Uterus (tissue), 4 donors: ENCODE measurements at regions of chr11 and their contacts with region 1.

Region 1: GRCh38 chr11:12673924-12674570 is at the start of gene TEAD1:
- DNase-seq: peak; percentile 95 to 99
- H3K4me3 ChIP-seq: peak within 1 kb of the TSS; percentile 61 to 96
- H3K27ac ChIP-seq: peak within 1 kb of the TSS; percentile 96 to 100
- H3K4me1 ChIP-seq: peaks cover under 1 to 4% of the 10 kb centered on the region in 2 donors
- H3K27me3 ChIP-seq: no peaks in the 10 kb centered on the region
- CTCF ChIP-seq: peak in 2 of 4 experiments; percentile 20 to 21
- POLR2A ChIP-seq: peak; percentile 68 to 88
- total RNA-seq, gene TEAD1: 38.8 to 110 (median 75.3) TPM

Region 2: DNA sequence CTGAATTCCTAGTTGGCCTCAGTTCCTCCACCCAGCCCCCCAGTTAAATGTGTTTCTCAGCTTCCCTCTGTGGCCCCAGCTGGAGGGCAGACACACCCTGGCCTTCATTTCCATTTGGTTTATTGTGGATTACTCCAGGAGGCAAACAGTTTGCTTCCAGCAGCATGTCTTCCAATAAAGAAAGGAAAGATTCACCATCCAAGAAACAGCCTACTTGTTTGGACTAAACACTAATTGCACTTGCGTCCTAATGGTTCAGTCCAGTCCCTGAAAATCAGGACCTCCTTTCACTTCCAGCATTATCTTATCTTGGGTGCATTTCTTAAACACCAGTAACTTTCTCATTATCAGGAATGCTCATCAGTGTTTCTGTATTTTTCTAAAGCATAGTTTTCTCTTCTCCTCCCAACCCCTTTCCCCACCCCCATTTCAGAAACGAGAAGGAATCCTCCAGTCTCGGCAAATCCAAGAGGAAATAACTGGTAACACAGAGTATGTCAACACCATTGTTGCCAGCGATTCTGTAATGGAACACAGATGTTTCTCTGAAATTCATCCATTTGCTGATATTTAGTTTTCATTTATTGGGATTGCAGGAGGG is 165.8 kb before region 1 on chr11:
- intact Hi-C with region 1: no loop called
- DNase-seq: peak; percentile 37 to 47
- H3K4me3 ChIP-seq: no peak overlapping the region
- H3K27ac ChIP-seq: peak overlapping the region; percentile 70 to 72
- H3K4me1 ChIP-seq: peaks cover 0 to 7% of the 10 kb centered on the region in 2 donors
- H3K27me3 ChIP-seq: no peaks in the 10 kb centered on the region
- CTCF ChIP-seq: no peak
- POLR2A ChIP-seq: no peak

Region 3: DNA sequence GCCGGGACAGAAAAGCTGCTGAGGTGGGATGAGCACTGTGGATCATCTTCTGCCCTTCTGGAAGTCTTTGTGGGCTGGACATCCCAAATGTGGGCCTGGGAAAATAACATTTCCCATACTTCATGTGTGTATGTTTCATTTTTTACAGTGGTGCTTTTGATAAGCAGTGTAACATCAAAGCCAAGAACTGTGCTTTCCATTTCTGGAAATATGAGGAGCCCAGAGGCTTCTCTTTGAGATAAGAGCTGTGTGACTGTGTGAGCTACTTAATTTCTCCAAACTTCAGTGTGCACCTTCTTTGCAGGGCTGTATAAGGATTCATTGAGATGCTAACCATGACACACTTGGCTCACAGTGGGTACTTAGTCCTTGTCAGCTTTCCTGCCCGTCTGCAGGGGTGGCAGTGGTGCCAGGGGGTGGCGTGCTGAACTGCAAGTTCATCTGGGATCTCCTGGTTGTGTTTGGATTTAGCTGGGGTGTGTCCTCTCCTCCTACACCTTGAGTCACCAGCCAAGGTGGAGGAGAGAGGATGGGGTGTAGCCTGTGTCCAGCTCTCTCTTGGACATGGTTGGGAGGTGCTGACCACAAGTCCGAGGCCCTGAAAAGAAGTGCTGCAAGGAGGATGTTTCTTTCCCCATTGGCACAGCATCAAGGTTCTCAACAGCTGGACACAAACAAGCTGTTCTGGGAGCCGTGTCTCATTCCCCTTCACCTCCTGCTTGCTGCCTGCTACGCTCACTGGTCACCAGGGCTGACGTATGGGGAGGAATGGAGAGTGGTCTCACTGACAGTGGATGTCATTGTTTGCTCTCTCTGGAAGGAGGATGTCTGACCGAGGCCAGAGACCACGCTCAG is 139.6 kb after region 1 on chr11:
- intact Hi-C with region 1: loop called (anchors 5 kb)
- DNase-seq: peak; percentile 71 to 81
- H3K4me3 ChIP-seq: no peak overlapping the region
- H3K27ac ChIP-seq: peak overlapping the region; percentile 83 to 85
- H3K4me1 ChIP-seq: peaks cover 6 to 19% of the 10 kb centered on the region in 2 donors
- H3K27me3 ChIP-seq: no peaks in the 10 kb centered on the region
- CTCF ChIP-seq: no peak
- POLR2A ChIP-seq: no peak

Region 4: GRCh38 chr11:12888525-12889158 is 214.6 kb after region 1 on chr11:
- intact Hi-C with region 1: loop called (anchors 10 kb)
- DNase-seq: peak; percentile 85 to 93
- H3K4me3 ChIP-seq: no peak overlapping the region
- H3K27ac ChIP-seq: peak overlapping the region; percentile 57 to 67
- H3K4me1 ChIP-seq: no peaks in the 10 kb centered on the region
- H3K27me3 ChIP-seq: no peaks in the 10 kb centered on the region
- CTCF ChIP-seq: peak; percentile 69 to 83 (median 80)
- POLR2A ChIP-seq: no peak